RWPE1 (cell line): ENCODE measurements at regions of chr1 and their contacts with region 1.

Region 1: DNA sequence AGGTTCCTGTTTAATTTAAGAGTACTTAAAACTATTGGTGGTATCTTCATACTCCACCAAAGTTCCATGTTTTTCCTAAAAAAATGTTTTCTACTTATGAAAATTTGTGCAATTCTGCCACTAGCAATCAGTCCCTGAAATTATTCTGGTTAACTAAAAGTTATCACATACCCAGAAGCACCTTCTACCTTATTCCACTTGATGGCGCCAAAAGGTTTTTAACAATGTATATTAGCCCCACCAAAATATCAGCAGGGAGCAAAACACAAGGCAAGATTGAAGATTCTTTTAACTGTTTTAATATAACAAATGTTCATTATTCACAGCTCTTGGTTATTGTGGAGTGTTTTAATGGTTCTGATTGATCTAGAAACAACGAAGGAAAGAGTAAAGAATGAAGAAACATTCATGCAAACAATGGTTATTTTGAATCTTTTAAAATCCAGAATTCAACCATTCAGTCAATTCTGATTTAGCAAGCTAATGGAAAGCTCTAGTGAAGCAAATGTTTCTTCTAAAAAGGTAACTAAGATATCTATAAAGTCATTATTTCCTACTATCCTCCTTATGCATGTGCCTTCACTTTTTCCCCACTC is 67.2 kb downstream of the TTLL7 start:
- DNase-seq: peak; percentile 56
- H3K27ac ChIP-seq: no peak overlapping the region
- CTCF ChIP-seq: peak; percentile 81

Region 2: GRCh38 chr1:84122780-84123382 is 191.1 kb after region 1 on chr1:
- CTCF ChIA-PET with region 1: interaction called, 10 read pairs
- POLR2A ChIA-PET with region 1: no interaction called
- DNase-seq: peak; percentile 26
- H3K27ac ChIP-seq: no peak overlapping the region
- CTCF ChIP-seq: peak; percentile 74